Right cardiac atrium (tissue), 5 donors: ENCODE measurements at regions of chrX and their contacts with region 1.

Region 1: GRCh38 chrX:48493890-48494364 is 14.9 kb upstream of the PORCN start:
- DNase-seq: no peak
- ATAC-seq: peak; percentile 25 to 47
- H3K4me3 ChIP-seq: no peak overlapping the region
- H3K27ac ChIP-seq: no peak overlapping the region
- H3K4me1 ChIP-seq: no peaks in the 10 kb centered on the region
- H3K27me3 ChIP-seq: no peaks in the 10 kb centered on the region

Region 2: GRCh38 chrX:48083212-48083611 is 410.7 kb before region 1 on chrX:
- intact Hi-C with region 1: loop called in 1 of 4 experiments (anchors 10 kb)
- DNase-seq: peak in 2 of 3 donors; percentile 17 to 50
- ATAC-seq: peak; percentile 64 to 85
- H3K4me3 ChIP-seq: no peak overlapping the region
- H3K27ac ChIP-seq: no peak overlapping the region
- H3K4me1 ChIP-seq: no peaks in the 10 kb centered on the region
- H3K27me3 ChIP-seq: no peaks in the 10 kb centered on the region

Region 3: GRCh38 chrX:48589482-48590162 is 95.7 kb after region 1 on chrX:
- intact Hi-C with region 1: no loop called
- DNase-seq: no peak
- ATAC-seq: peak; percentile 19 to 24
- H3K4me3 ChIP-seq: no peak overlapping the region
- H3K27ac ChIP-seq: peak overlapping the region; percentile 86
- H3K4me1 ChIP-seq: peaks cover 2% of the 10 kb centered on the region
- H3K27me3 ChIP-seq: no peaks in the 10 kb centered on the region

Region 4: GRCh38 chrX:49269010-49269767 is 775.3 kb after region 1 on chrX:
- intact Hi-C with region 1: no loop called
- DNase-seq: peak; percentile 97 to 98 (median 98)
- ATAC-seq: peak; percentile 96 to 97
- H3K4me3 ChIP-seq: peak overlapping the region; percentile 64
- H3K27ac ChIP-seq: peak overlapping the region; percentile 99
- H3K4me1 ChIP-seq: no peaks in the 10 kb centered on the region
- H3K27me3 ChIP-seq: no peaks in the 10 kb centered on the region